ENCODE measurements at regions of chr11 and their contacts with region 1.

Region 1: GRCh38 chr11:57530596-57531507 is at the start of gene TIMM10:
- DNase-seq: peak; percentile 92
- H3K4me3 Mint-ChIP-seq: peak within 1 kb of the TSS; percentile 87
- H3K27ac Mint-ChIP-seq: peak within 1 kb of the TSS; percentile 87
- H3K4me1 Mint-ChIP-seq: peaks cover 32% of the 10 kb centered on the region
- H3K27me3 Mint-ChIP-seq: no peaks in the 10 kb centered on the region
- total RNA-seq, gene TIMM10: 98.2 and 99.6 TPM in 2 replicates

Region 2: GRCh38 chr11:57345555-57346211 is 185.2 kb before region 1 on chr11:
- intact Hi-C with region 1: loop called (anchors 1 kb)
- DNase-seq: peak; percentile 33
- H3K4me3 Mint-ChIP-seq: no peak overlapping the region
- H3K27ac Mint-ChIP-seq: no peak overlapping the region
- H3K4me1 Mint-ChIP-seq: peaks cover 13% of the 10 kb centered on the region
- H3K27me3 Mint-ChIP-seq: peaks cover 8% of the 10 kb centered on the region

Region 3: GRCh38 chr11:57493507-57494503 is 37.0 kb before region 1 on chr11:
- intact Hi-C with region 1: loop called (anchors 1 kb)
- DNase-seq: peak; percentile 50
- H3K4me3 Mint-ChIP-seq: no peak overlapping the region
- H3K27ac Mint-ChIP-seq: peak overlapping the region; percentile 23
- H3K4me1 Mint-ChIP-seq: peaks cover 11% of the 10 kb centered on the region
- H3K27me3 Mint-ChIP-seq: no peaks in the 10 kb centered on the region

Region 4: GRCh38 chr11:57649826-57650738 is 119.2 kb after region 1 on chr11 and contains the start of gene YPEL4:
- intact Hi-C with region 1: loop called (anchors 2 kb)
- DNase-seq: peak; percentile 49
- H3K4me3 Mint-ChIP-seq: peak within 1 kb of the TSS; percentile 86
- H3K27ac Mint-ChIP-seq: peak within 1 kb of the TSS; percentile 55
- H3K4me1 Mint-ChIP-seq: peaks cover 41% of the 10 kb centered on the region
- H3K27me3 Mint-ChIP-seq: peaks cover 31% of the 10 kb centered on the region
- total RNA-seq, gene YPEL4: 0.26 and 0.39 TPM in 2 replicates

Region 5: GRCh38 chr11:57712256-57713150 is 181.7 kb after region 1 on chr11 and contains the start of gene TMX2:
- intact Hi-C with region 1: loop called (anchors 1 kb)
- DNase-seq: peak; percentile 88
- H3K4me3 Mint-ChIP-seq: peak within 1 kb of the TSS; percentile 97
- H3K27ac Mint-ChIP-seq: peak within 1 kb of the TSS; percentile 94
- H3K4me1 Mint-ChIP-seq: peaks cover 53% of the 10 kb centered on the region
- H3K27me3 Mint-ChIP-seq: no peaks in the 10 kb centered on the region
- total RNA-seq, gene TMX2: 95.9 and 96.8 TPM in 2 replicates

Measured in activated T-helper 1 cell treated with anti-CD3 and anti-CD28 coated beads, Interleukin-12 subunit alpha, Interleukin-12 subunit beta, Interleukin-2, Interleukin-4 antibody, amounts not matched to agents 30 ng/mL and 10 ng/mL and 1 ng/mL, durations not matched to agents 14 hours and 24 hours and 36 hours (primary cell).